IMR-90 (cell line): ENCODE measurements at regions of chr9 and their contacts with region 1.

Region 1: GRCh38 chr9:124415102-124415851 is at the start of gene PSMB7:
- DNase-seq: peak; percentile 96
- ATAC-seq: peak; percentile 82
- H3K4me3 ChIP-seq: peak within 1 kb of the TSS; percentile 91
- H3K27ac ChIP-seq: peak within 1 kb of the TSS; percentile 71
- H3K4me1 ChIP-seq: peaks cover 9% of the 10 kb centered on the region
- H3K27me3 ChIP-seq: no peaks in the 10 kb centered on the region
- CTCF ChIP-seq: peak; percentile 72
- POLR2A ChIP-seq: peak; percentile 83
- RAD21 ChIP-seq: no peak
- total RNA-seq, gene PSMB7: 369 and 430 TPM in 2 replicates

Region 2: DNA sequence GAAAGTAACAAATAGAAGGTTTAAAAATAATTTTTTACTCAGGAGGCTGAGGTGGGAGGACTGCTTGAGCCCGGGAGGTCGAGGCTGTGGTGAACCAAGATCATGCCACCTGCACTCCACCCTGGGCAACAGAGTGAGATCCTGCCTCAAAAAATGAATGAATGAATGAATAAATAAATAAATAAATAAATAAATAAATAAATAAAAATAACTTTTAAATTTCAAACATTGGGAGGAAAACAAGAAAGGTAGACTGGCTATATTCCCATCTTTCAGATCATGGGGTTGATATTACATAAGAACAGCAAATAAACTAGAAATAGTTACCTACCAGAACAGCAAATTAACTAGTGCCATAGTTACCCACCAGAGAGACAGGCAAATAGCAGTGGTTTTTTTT is 328.1 kb before region 1 on chr9:
- CTCF ChIA-PET with region 1: no interaction called
- POLR2A ChIA-PET with region 1: no interaction called
- dilution Hi-C with region 1: no loop called
- in situ Hi-C with region 1: no loop called
- intact Hi-C with region 1: no loop called
- DNase-seq: no peak
- ATAC-seq: no peak
- H3K4me3 ChIP-seq: no peak overlapping the region
- H3K27ac ChIP-seq: no peak overlapping the region
- H3K4me1 ChIP-seq: peaks cover 1% of the 10 kb centered on the region; the same call in 1 of the 2 replicates
- H3K27me3 ChIP-seq: peaks cover 36% of the 10 kb centered on the region
- CTCF ChIP-seq: no peak
- POLR2A ChIP-seq: no peak
- RAD21 ChIP-seq: no peak

Region 3: DNA sequence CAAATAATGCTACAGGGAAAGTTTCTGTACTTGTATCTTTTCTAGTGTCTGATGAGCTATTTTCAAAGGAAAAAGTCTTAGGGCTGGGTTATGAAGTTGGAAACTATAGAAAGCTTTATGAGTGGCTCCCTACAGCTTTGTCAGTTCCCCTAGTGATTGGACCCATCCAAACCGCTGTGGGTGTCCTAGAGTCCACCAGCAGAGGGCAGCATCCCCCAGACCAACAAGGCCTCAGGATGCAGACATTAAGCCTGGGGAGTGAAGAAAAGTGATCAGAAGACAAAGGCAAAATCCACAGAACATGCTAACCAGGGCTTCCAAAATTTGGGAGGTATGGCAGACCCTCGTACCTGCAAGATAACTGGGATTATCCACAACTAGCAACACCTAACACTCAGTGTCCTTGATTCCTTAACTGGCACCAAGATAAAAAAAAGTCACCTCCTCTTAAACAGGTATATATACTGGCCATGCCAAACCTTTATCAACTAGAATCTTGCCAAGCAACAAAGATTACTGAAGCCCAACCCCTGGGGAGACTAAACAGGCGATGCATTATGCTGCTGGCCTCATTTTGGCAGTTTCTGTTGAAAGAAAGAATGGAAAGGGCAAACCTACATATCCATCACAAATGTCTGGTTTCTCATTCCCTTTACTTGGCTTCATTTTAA is 202.3 kb after region 1 on chr9:
- CTCF ChIA-PET with region 1: no interaction called
- POLR2A ChIA-PET with region 1: no interaction called
- dilution Hi-C with region 1: no loop called
- in situ Hi-C with region 1: no loop called
- intact Hi-C with region 1: loop called (anchors 10 kb)
- DNase-seq: peak; percentile 79
- ATAC-seq: peak; percentile 98
- H3K4me3 ChIP-seq: no peak overlapping the region
- H3K27ac ChIP-seq: no peak overlapping the region
- H3K4me1 ChIP-seq: peaks cover 2% of the 10 kb centered on the region
- H3K27me3 ChIP-seq: peaks cover 7% of the 10 kb centered on the region
- CTCF ChIP-seq: peak; percentile 97
- POLR2A ChIP-seq: peak; percentile 44; the same call in 1 of the 2 replicates
- RAD21 ChIP-seq: peak; percentile 98

Region 4: DNA sequence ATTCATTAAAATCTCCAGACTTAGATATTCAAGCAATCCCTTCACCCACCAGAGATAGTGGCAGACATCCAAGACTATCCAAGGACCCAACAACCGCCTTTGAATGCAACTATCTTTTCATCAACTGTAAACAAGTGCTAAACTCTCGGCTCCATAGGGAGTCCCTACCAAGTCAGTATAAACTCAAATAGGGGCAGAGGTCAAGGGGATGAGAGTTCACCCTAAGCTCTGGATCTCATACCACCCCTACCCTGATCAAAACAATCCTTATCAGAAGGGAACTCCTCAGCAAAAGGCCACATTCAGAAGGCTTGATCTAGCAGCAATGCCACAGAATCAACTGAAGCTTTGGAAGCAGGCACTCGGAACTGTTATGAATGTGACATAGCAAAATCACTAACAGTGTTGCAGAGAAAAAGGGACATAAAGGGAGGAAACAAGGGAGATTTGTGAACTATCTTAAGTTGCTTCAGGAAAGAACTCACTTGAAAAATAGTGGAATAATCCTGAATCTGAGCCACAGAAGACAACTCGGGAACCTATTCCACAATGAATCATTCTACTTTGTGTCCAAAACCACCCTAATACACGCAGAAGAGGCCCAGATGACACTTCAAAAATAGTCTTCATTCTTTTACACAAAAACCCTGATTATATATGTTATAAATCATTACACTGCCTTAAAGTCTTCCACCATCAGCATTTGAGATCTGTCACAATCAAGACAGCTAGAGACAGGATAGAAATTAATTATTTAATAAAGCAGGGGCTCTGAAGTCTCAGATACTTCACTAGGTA is 306.0 kb after region 1 on chr9:
- CTCF ChIA-PET with region 1: no interaction called
- POLR2A ChIA-PET with region 1: no interaction called
- dilution Hi-C with region 1: no loop called
- in situ Hi-C with region 1: loop called (anchors 25 kb)
- intact Hi-C with region 1: no loop called
- DNase-seq: peak; percentile 64
- ATAC-seq: peak; percentile 71
- H3K4me3 ChIP-seq: no peak overlapping the region
- H3K27ac ChIP-seq: no peak overlapping the region
- H3K4me1 ChIP-seq: peaks cover 11% of the 10 kb centered on the region
- H3K27me3 ChIP-seq: no peaks in the 10 kb centered on the region
- CTCF ChIP-seq: no peak
- POLR2A ChIP-seq: no peak
- RAD21 ChIP-seq: no peak

Region 5: GRCh38 chr9:124754289-124754688 is 339.0 kb after region 1 on chr9:
- CTCF ChIA-PET with region 1: no interaction called
- POLR2A ChIA-PET with region 1: no interaction called
- dilution Hi-C with region 1: no loop called
- in situ Hi-C with region 1: loop called (anchors 10 kb)
- intact Hi-C with region 1: loop called (anchors 5 kb)
- DNase-seq: peak; percentile 55
- ATAC-seq: peak; percentile 63
- H3K4me3 ChIP-seq: no peak overlapping the region
- H3K27ac ChIP-seq: no peak overlapping the region
- H3K4me1 ChIP-seq: peaks cover 11% of the 10 kb centered on the region
- H3K27me3 ChIP-seq: peaks cover 28% of the 10 kb centered on the region
- CTCF ChIP-seq: peak; percentile 64
- POLR2A ChIP-seq: no peak
- RAD21 ChIP-seq: peak; percentile 64

Region 6: DNA sequence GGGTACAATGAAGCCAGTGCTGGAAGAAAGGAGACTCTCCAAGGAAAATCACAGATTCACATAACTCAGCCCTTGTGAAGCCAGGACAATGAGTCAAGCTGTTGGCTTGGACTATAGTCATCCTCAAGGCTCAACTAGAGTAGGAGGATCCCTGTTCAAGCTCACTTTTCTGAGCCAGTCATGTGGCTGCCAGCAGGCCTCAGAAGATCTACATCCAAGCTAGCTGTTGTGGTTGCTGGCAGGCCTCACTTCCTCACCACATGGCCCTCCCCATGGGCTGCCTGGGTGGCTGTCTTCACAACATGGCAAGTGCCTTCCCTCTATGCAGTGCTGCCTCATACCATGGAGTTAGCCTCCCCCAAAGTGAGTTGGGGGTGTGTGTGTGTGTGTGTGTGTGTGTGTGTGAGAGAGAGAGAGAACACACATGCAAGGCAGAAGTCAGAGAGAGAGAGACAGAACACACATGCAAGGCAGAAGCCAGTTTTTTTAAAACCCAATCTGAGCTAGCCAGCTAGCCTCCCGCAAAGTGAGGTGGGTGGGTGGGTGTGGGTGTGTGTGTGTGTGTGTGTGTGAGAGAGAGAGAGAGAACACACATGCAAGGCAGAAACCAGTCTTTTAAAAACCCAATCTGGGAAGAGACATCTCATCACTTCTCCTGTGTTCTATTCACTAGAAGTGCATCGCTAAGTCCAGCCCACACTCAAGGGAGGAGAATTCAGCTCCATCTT is 710.9 kb after region 1 on chr9:
- CTCF ChIA-PET with region 1: no interaction called
- POLR2A ChIA-PET with region 1: interaction called, 13 read pairs
- dilution Hi-C with region 1: no loop called
- in situ Hi-C with region 1: no loop called
- intact Hi-C with region 1: no loop called
- DNase-seq: peak; percentile 100
- ATAC-seq: peak; percentile 98
- H3K4me3 ChIP-seq: no peak overlapping the region
- H3K27ac ChIP-seq: peak overlapping the region; percentile 30; the same call in 1 of the 2 replicates
- H3K4me1 ChIP-seq: peaks cover 8% of the 10 kb centered on the region
- H3K27me3 ChIP-seq: no peaks in the 10 kb centered on the region
- CTCF ChIP-seq: no peak
- POLR2A ChIP-seq: no peak
- RAD21 ChIP-seq: peak; percentile 20; the same call in 1 of the 2 replicates